ENCODE measurements at regions of chr11 and their contacts with region 1.

Region 1: GRCh38 chr11:61281581-61282250 is 13.4 kb downstream of the VWCE start:
- DNase-seq: peak; percentile 39
- H3K4me3 ChIP-seq: no peak overlapping the region
- H3K27ac ChIP-seq: no peak overlapping the region
- H3K4me1 ChIP-seq: no peaks in the 10 kb centered on the region
- CTCF ChIP-seq: no peak

Region 2: GRCh38 chr11:61163714-61164605 is 117.8 kb before region 1 on chr11:
- CTCF ChIA-PET with region 1: no interaction called
- POLR2A ChIA-PET with region 1: no interaction called
- intact Hi-C with region 1: no loop called
- DNase-seq: no peak
- H3K4me3 ChIP-seq: no peak overlapping the region
- H3K27ac ChIP-seq: no peak overlapping the region
- H3K4me1 ChIP-seq: peaks cover 23% of the 10 kb centered on the region
- CTCF ChIP-seq: no peak

Region 3: DNA sequence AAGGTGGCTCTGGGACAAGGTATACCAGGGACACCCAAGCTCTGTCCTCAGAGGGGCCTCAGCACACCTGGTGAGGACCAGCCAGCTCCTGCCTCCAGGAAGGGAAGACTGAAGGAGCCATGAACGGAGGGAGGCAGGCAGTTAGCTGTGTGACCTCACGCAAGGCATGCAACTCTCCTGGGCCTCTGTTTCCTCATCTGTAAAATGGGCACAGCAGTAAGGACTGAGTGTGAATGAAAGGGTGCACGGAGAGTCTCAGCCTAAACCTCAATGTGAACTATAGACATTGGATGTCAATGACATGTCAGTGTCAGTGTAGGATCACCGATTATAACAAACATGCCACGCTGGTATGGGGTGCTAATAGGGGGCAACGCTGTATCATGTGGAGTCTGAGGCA is 22.4 kb before region 1 on chr11:
- CTCF ChIA-PET with region 1: no interaction called
- POLR2A ChIA-PET with region 1: no interaction called
- intact Hi-C with region 1: no loop called
- DNase-seq: no peak
- H3K4me3 ChIP-seq: no peak overlapping the region
- H3K27ac ChIP-seq: no peak overlapping the region
- H3K4me1 ChIP-seq: no peaks in the 10 kb centered on the region
- CTCF ChIP-seq: no peak

Region 4: DNA sequence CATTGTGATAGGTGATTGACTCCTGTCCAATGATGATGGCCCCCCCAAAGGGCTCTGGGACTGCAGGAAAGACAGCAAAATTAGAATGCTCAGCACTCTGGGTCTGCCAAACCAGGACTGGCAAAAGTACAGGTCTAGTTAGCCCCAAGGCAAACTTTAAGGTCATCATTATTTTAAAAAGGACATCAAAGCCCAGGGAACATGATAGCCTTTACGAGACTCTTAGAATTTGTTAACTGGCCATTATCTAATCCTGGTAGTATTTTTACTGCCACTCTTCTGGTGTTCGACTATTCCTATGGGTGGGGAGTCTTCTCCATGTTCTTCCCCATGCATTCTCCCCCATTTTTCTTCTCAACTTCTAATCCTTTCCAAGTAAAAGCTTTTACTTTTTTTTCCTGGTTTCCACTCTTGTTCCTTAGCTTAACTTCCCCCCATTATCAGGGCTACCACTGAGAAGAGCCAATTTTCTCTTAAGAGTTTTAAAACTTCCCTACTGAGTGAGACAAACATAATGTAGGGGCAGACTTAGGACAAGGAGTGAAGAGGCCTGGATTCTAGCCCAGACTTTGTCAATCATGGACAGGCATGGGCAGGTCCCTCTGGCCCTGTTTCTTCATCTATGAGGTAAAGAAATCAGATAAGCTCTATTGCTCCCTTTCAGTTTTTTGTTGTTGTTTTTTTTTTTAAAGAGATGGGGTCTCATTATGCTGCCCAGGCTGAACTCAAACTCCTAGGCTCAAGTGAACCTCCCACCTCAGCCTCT is 44.1 kb after region 1 on chr11:
- CTCF ChIA-PET with region 1: interaction called, 17 read pairs
- POLR2A ChIA-PET with region 1: no interaction called
- intact Hi-C with region 1: no loop called
- DNase-seq: no peak
- H3K4me3 ChIP-seq: no peak overlapping the region
- H3K27ac ChIP-seq: no peak overlapping the region
- H3K4me1 ChIP-seq: peaks cover under 1% of the 10 kb centered on the region
- CTCF ChIP-seq: no peak

Region 5: DNA sequence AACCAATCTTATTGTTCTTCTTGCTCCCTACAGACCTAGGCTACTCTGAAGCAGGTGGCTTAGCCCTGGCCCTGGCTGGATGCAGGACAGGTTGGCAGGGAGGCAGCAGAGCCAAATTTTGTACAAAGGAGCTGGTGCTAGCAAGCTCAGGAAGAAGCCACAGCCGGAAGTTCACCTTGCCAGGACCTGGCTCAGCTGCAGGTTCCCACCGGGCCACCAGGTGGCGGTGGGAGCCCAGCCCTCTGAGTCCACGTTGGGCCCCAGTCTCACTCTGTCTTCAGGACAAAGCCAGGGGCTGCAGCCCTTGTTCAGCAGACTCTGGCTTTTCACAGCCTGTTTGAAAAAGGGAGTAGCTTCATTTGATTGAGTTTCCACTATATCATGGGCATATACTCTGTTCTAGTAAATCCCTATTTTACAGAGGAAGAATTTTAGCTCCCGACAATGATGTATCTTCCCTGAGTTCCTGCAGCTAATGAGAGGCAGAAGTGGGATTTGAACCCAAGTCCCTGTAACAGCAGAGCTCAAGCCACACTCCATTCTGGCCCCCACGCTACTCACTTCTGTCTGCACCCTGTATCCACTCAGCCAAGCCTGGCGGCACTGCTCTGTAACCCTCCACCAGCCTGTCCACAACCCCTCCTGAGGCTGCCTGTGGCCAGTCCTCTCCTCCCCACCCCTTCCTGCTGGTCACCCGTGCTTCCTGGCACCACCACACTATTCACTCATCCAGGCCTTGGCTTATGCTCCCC is 54.6 kb after region 1 on chr11:
- CTCF ChIA-PET with region 1: no interaction called
- POLR2A ChIA-PET with region 1: no interaction called
- intact Hi-C with region 1: no loop called
- DNase-seq: peak; percentile 91
- H3K4me3 ChIP-seq: no peak overlapping the region
- H3K27ac ChIP-seq: peak overlapping the region; percentile 56
- H3K4me1 ChIP-seq: peaks cover 39% of the 10 kb centered on the region
- CTCF ChIP-seq: peak; percentile 98

Region 6: DNA sequence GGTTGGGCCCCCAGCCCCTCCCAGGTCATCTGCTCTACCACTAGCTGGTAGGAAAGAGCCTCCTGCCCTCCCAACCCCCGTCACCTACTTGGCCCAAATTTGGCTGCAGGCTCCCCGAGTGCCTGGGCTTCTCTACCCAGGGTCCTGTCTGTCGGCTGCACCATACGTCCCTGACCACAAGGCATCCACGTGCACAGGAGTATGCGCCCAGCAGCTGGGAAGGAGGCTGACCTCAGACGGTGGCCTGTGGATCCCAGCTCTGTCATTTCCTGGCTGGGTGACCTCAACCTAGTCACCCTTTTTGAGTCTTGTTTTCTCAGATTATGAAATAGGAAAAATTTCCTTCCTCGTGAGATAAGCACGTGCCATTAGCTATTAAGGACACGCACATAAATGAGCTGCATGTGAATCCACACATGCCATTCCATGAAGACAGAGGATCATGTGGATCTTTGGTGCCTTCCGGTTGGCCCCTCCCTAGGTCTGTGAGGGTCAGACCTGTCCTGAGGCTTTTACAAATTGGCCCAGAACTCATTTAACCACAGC is 66.3 kb after region 1 on chr11:
- CTCF ChIA-PET with region 1: no interaction called
- POLR2A ChIA-PET with region 1: no interaction called
- intact Hi-C with region 1: no loop called
- DNase-seq: no peak
- H3K4me3 ChIP-seq: no peak overlapping the region
- H3K27ac ChIP-seq: no peak overlapping the region
- H3K4me1 ChIP-seq: no peaks in the 10 kb centered on the region
- CTCF ChIP-seq: no peak

Measured in OCI-LY7 (cell line).